Activated CD8-positive, alpha-beta T cell treated with anti-CD3 and anti-CD28 coated beads, Interleukin-2, amount 10 ng/mL, durations not matched to agents 7 days and 5 days (primary cell): ENCODE measurements at regions of chr5 and their contacts with region 1.

Region 1: GRCh38 chr5:112737463-112738190 is at the start of gene APC:
- DNase-seq: peak; percentile 87
- ATAC-seq: peak; percentile 100
- H3K4me3 Mint-ChIP-seq: peak within 1 kb of the TSS; percentile 88
- H3K27ac Mint-ChIP-seq: peak within 1 kb of the TSS; percentile 73
- H3K4me1 Mint-ChIP-seq: peaks cover 12% of the 10 kb centered on the region
- H3K27me3 Mint-ChIP-seq: no peaks in the 10 kb centered on the region
- total RNA-seq, gene APC: 21.5 to 24.5 TPM

Region 2: GRCh38 chr5:112691758-112692157 is 45.9 kb before region 1 on chr5:
- CTCF ChIA-PET with region 1: interaction called, 17 read pairs
- POLR2A ChIA-PET with region 1: no interaction called
- DNase-seq: peak; percentile 50
- ATAC-seq: peak; percentile 57
- H3K4me3 Mint-ChIP-seq: no peak overlapping the region
- H3K27ac Mint-ChIP-seq: no peak overlapping the region
- H3K4me1 Mint-ChIP-seq: no peaks in the 10 kb centered on the region
- H3K27me3 Mint-ChIP-seq: peaks cover 33% of the 10 kb centered on the region

Region 3: GRCh38 chr5:112707187-112708102 is 30.2 kb before region 1 on chr5:
- CTCF ChIA-PET with region 1: no interaction called
- POLR2A ChIA-PET with region 1: interaction called, 10 read pairs
- DNase-seq: peak; percentile 99
- ATAC-seq: peak; percentile 97
- H3K4me3 Mint-ChIP-seq: peak overlapping the region; percentile 88
- H3K27ac Mint-ChIP-seq: peak overlapping the region; percentile 79
- H3K4me1 Mint-ChIP-seq: peaks cover 43% of the 10 kb centered on the region
- H3K27me3 Mint-ChIP-seq: peaks cover 2% of the 10 kb centered on the region